CD4-positive, alpha-beta memory T cell (primary cell): ENCODE measurements at regions of chr10 and their contacts with region 1.

Region 1: GRCh38 chr10:30456266-30456665 is 22.3 kb downstream of the MAP3K8 start:
- DNase-seq: peak in 3 of 5 donors; percentile 22 to 40 (median 34)
- H3K4me3 ChIP-seq: peak overlapping the region in 1 of 2 donors; percentile 13
- H3K4me3 Mint-ChIP-seq: peak overlapping the region in 7 of 8 donors; percentile 55 to 82 (median 74)
- H3K27ac ChIP-seq: peak overlapping the region; percentile 24
- H3K27ac Mint-ChIP-seq: peak overlapping the region; percentile 35 to 84 (median 58)
- H3K4me1 ChIP-seq: peaks cover 42% of the 10 kb centered on the region
- H3K4me1 Mint-ChIP-seq: peaks cover 19 to 39% (median 27%) of the 10 kb centered on the region in 4 donors
- H3K27me3 ChIP-seq: no peaks in the 10 kb centered on the region
- H3K27me3 Mint-ChIP-seq: no peaks in the 10 kb centered on the region

Region 2: GRCh38 chr10:30413996-30414576 is 42.2 kb before region 1 on chr10:
- CTCF ChIA-PET with region 1: interaction called, 4 read pairs
- POLR2A ChIA-PET with region 1: no interaction called
- intact Hi-C with region 1: loop called (anchors 5 kb)
- DNase-seq: peak in 4 of 5 donors; percentile 46 to 53 (median 52)
- H3K4me3 ChIP-seq: no peak overlapping the region
- H3K4me3 Mint-ChIP-seq: no peak overlapping the region
- H3K27ac ChIP-seq: no peak overlapping the region
- H3K27ac Mint-ChIP-seq: no peak overlapping the region
- H3K4me1 ChIP-seq: peaks cover 15% of the 10 kb centered on the region
- H3K4me1 Mint-ChIP-seq: peaks cover 11 to 19% (median 16%) of the 10 kb centered on the region in 4 donors
- H3K27me3 ChIP-seq: no peaks in the 10 kb centered on the region
- H3K27me3 Mint-ChIP-seq: no peaks in the 10 kb centered on the region

Region 3: DNA sequence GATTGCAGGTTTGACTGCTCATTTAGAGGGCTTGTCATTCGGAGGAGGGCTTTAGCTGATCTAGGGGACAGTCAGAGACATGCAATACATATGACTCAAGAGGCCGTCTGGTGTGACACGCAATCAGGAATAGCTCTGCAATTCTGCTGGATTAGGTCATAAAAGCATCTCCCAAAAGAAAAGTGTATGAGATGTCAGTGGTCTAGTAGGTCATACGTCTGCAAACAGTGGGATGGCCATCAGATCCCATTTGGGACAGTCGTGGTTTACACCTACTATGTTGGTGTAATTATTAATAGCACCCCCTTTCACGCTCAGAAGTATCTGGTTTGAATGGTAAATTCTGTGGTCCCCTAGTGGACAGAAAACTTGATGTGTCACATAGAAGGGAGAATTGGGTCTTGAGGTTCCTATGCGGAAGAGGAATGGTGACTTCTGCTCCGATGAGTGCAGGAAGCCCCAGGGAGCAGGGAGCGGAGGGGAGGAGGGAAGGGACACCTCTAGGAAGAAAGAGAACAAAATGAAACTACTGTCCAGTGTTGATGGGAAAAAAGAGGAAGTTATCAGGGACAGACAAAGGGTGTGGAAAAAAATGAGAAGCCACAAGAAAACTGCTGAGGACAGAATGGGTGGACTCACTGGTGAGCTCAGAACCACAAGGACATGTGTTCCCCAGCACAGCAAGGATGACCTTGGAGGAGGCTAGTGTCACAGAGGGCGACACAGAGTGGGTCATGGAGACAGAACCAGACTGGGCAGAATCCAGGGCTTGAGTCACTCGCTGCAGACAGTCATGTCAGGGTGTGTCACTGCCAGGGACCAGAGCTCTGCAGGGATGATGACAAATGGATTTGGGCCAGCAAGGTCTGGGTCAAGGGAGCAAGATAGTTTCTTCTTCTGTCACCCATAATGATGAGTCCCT is 37.6 kb after region 1 on chr10:
- CTCF ChIA-PET with region 1: interaction called, 3 read pairs
- POLR2A ChIA-PET with region 1: interaction called, 4 read pairs
- intact Hi-C with region 1: loop called (anchors 5 kb)
- DNase-seq: no peak
- H3K4me3 ChIP-seq: no peak overlapping the region
- H3K4me3 Mint-ChIP-seq: peak overlapping the region in 3 of 8 donors; percentile 3 to 43 (median 19)
- H3K27ac ChIP-seq: no peak overlapping the region
- H3K27ac Mint-ChIP-seq: peak overlapping the region in 5 of 7 donors; percentile 1 to 63 (median 29)
- H3K4me1 ChIP-seq: peaks cover 61% of the 10 kb centered on the region
- H3K4me1 Mint-ChIP-seq: peaks cover 40 to 78% (median 65%) of the 10 kb centered on the region in 4 donors
- H3K27me3 ChIP-seq: no peaks in the 10 kb centered on the region
- H3K27me3 Mint-ChIP-seq: no peaks in the 10 kb centered on the region

Region 4: DNA sequence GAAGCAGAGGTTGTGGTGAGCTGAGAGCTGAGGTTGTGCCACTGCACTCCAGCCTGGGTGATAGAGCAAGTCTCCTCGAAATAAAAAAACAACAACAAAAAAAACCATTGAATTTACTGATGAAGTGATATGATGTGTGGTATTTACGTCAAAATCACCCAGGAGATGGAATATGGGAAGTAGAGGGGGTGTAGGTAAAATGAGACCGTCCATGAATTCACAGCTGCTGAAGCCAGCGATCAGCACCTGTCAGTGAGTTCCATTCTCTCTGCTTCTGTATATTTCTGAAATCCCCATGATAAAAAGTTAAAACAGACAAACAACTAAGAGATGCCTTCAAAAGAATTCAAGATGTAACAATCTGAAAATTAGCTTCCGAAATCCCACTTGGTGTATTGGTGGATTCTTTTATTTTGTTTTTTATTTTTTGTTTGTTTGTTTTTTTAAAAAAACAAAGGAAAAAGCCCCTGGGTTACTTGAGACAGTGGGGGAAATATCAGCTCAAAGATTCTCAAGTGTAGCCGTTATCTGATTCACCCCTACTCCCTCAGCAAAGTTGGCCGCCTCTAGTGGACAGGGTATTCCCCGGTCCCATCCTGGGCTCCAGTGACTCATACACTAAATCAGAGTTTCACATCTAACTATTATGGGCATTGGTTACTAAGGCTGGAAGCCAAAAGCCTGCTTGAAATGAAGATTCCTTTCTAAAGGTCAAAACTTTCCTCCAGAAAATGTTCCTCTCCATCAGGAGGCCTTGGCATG is 54.1 kb after region 1 on chr10:
- CTCF ChIA-PET with region 1: no interaction called
- POLR2A ChIA-PET with region 1: no interaction called
- intact Hi-C with region 1: no loop called
- DNase-seq: peak in 1 of 5 donors; percentile 64
- H3K4me3 ChIP-seq: no peak overlapping the region
- H3K4me3 Mint-ChIP-seq: no peak overlapping the region
- H3K27ac ChIP-seq: no peak overlapping the region
- H3K27ac Mint-ChIP-seq: no peak overlapping the region
- H3K4me1 ChIP-seq: no peaks in the 10 kb centered on the region
- H3K4me1 Mint-ChIP-seq: peaks cover 6 to 19% (median 7%) of the 10 kb centered on the region in 4 donors
- H3K27me3 ChIP-seq: no peaks in the 10 kb centered on the region
- H3K27me3 Mint-ChIP-seq: peaks cover 0 to 1% of the 10 kb centered on the region in 2 donors